ENCODE measurements at regions of chr5 and their contacts with region 1.

Region 1: GRCh38 chr5:134527146-134527960 is 1.9 kb downstream of the JADE2 start:
- DNase-seq: peak; percentile 94
- ATAC-seq: peak; percentile 66
- H3K4me3 Mint-ChIP-seq: peak overlapping the region; percentile 85
- H3K27ac Mint-ChIP-seq: peak overlapping the region; percentile 97
- H3K4me1 Mint-ChIP-seq: peaks cover 52% of the 10 kb centered on the region
- H3K27me3 Mint-ChIP-seq: no peaks in the 10 kb centered on the region
- CTCF ChIP-seq: peak; percentile 74

Region 2: DNA sequence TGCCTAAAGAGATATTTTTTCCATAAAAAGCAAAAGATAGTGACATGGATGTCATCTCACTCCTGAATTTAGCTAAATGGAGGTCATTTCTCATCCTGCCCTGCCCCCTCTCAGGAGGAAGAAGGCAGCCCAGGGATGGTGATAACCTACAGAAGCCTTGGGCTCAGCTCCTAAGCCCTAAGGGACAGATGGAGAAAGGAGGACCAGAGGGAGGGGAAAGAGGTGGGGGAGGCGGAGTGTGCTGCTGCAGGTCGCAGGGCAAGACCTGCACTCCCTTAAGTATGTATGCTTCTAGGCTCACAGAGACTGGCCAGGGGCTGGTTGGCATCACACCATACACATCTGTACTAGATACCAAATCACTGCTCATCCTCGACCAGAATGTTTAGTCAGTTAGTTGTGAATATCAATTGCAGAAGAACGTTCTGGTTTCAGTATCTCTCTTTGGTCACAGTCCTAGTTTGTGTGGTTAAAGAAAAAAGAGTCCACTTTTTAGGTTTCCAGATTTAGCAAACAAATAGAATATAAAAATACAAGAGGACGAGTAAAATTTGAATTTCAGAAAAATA is 97.3 kb before region 1 on chr5:
- CTCF ChIA-PET with region 1: interaction called, 16 read pairs
- POLR2A ChIA-PET with region 1: interaction called, 18 read pairs
- DNase-seq: peak; percentile 33
- ATAC-seq: peak; percentile 81
- H3K4me3 Mint-ChIP-seq: peak overlapping the region; percentile 65
- H3K27ac Mint-ChIP-seq: peak overlapping the region; percentile 83
- H3K4me1 Mint-ChIP-seq: peaks cover 58% of the 10 kb centered on the region
- H3K27me3 Mint-ChIP-seq: no peaks in the 10 kb centered on the region
- CTCF ChIP-seq: no peak

Region 3: GRCh38 chr5:134503088-134503946 is 24.0 kb before region 1 on chr5:
- CTCF ChIA-PET with region 1: interaction called, 20 read pairs
- POLR2A ChIA-PET with region 1: interaction called, 8 read pairs
- DNase-seq: peak; percentile 27
- ATAC-seq: peak; percentile 46
- H3K4me3 Mint-ChIP-seq: no peak overlapping the region
- H3K27ac Mint-ChIP-seq: peak overlapping the region; percentile 88
- H3K4me1 Mint-ChIP-seq: peaks cover 31% of the 10 kb centered on the region
- H3K27me3 Mint-ChIP-seq: no peaks in the 10 kb centered on the region
- CTCF ChIP-seq: no peak

Region 4: DNA sequence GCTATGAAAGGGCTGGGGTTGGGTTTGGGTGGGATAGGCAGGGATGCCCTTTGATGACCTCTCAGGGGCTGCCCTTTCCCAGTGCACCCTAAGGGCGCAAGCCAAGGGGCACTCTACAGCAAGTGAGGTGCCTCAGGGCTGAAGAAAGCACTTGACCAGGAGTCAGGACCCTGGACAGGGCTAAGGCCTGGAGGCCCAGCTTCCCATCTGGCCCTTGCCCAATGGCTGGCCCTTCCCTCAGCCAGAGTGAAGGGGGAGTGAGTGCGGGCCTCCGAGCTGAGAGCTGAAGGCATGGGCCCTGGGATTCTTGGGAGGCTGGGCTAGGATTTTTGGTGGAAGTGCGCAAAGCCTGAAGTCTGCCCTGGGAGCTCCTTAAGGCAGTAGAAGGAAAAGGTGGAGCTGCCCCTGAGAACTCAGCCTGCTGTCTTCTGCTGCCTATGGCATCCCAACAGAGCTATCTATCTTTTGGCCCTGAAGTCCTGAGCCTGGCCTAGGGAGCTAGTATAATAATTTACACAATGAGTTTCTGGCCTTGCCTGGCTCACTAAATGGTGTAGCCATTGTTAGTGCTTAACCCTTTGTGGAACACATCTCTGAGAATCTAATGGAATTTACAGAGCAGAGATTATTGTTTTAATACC is 14.5 kb after region 1 on chr5:
- CTCF ChIA-PET with region 1: interaction called, 47 read pairs
- POLR2A ChIA-PET with region 1: interaction called, 12 read pairs
- DNase-seq: peak; percentile 82
- ATAC-seq: peak; percentile 13
- H3K4me3 Mint-ChIP-seq: no peak overlapping the region
- H3K27ac Mint-ChIP-seq: no peak overlapping the region
- H3K4me1 Mint-ChIP-seq: peaks cover 36% of the 10 kb centered on the region
- H3K27me3 Mint-ChIP-seq: no peaks in the 10 kb centered on the region
- CTCF ChIP-seq: no peak

Region 5: DNA sequence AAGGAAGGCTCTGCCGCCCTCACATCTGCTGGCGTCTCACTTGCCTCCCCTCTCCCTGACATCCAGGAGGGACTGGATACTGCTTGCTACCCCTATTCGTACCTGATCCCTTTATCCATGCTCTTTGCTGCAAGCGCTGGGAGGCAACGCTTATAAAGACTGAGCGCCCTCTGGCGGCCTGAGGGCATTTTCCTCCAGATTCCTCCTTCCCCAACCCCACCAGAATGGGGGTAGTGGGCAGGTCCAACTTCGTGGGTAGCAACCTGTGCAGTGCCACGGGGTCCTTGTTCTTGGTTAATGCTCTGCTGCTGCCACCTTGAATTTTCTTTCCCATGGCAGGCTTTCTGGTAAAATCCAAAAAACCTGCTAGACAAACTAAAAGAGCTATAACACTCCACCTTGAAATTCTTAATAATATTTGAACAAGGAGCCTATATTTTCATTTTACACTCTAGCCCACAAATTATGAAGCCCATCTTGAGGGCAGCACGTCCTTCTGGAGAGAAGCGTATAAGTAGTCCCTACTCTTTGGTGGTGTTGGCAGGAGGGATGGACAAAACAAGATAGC is 50.5 kb after region 1 on chr5:
- CTCF ChIA-PET with region 1: interaction called, 25 read pairs
- POLR2A ChIA-PET with region 1: no interaction called
- DNase-seq: peak; percentile 92
- ATAC-seq: peak; percentile 91
- H3K4me3 Mint-ChIP-seq: no peak overlapping the region
- H3K27ac Mint-ChIP-seq: peak overlapping the region; percentile 63; the same call in 1 of the 2 replicates
- H3K4me1 Mint-ChIP-seq: no peaks in the 10 kb centered on the region
- H3K27me3 Mint-ChIP-seq: no peaks in the 10 kb centered on the region
- CTCF ChIP-seq: peak; percentile 71

Measured in WTC11 (cell line).